Activated CD4-positive, alpha-beta T cell treated with anti-CD3 and anti-CD28 coated beads, Interleukin-2, amount 10 ng/mL, durations not matched to agents 24 days and 14 days (primary cell): ENCODE measurements at regions of chr2 and their contacts with region 1.

Region 1: GRCh38 chr2:97673182-97673914 is 3.8 kb downstream of the C2orf92 start:
- DNase-seq: no peak
- H3K4me3 Mint-ChIP-seq: peak overlapping the region; percentile 60
- H3K27ac Mint-ChIP-seq: peak overlapping the region; percentile 96
- H3K4me1 Mint-ChIP-seq: peaks cover 33% of the 10 kb centered on the region
- H3K27me3 Mint-ChIP-seq: no peaks in the 10 kb centered on the region

Region 2: DNA sequence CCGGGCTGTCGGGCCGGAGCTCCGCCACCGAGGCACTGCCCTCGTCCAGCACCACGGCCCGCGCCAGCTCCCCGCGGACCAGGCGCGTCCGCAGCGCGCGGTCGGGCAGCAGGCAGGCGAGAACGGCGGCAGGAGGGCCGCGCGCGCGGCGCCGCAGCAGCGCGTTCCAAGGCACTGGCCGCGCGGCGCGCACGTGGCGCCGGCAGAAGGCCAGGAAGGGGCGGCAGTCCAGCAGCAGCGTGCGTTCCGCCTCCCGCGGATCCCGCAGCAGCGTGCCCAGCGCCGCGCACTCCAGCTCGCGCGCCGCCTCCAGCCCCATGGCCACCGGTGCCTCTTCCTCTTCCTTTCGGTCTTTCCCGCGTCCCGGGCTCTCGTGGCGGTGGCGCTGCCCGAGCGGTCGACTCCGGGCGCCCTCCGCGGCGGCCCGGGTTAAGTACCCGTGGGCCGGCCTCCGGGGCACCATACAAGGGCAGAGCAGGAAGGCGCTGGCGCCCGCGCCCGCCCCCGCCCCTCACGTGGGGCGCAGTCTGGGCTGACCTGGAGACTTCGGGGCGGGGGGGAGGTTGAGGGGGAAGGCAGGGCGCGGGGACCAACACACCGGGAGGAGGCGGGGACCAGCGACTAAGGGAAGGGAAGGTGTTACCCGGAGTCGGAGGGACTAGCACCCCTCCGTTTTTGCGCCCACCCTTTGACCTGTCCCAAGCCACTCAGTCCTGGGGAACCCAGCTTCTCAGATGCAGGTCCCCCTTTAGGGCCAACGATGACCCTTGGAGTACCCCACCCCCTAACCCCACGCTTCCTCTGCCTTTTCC is 1528.1 kb before region 1 on chr2 and contains the start of gene DUSP2:
- intact Hi-C with region 1: no loop called
- DNase-seq: peak; percentile 97
- H3K4me3 Mint-ChIP-seq: peak within 1 kb of the TSS; percentile 98
- H3K27ac Mint-ChIP-seq: peak within 1 kb of the TSS; percentile 95
- H3K4me1 Mint-ChIP-seq: peaks cover 52% of the 10 kb centered on the region
- H3K27me3 Mint-ChIP-seq: no peaks in the 10 kb centered on the region
- total RNA-seq, gene DUSP2: 436 and 445 TPM in 2 replicates

Region 3: GRCh38 chr2:97688062-97688827 is 14.9 kb after region 1 on chr2:
- intact Hi-C with region 1: loop called (anchors 1 kb)
- DNase-seq: no peak
- H3K4me3 Mint-ChIP-seq: peak overlapping the region; percentile 16
- H3K27ac Mint-ChIP-seq: peak overlapping the region; percentile 68
- H3K4me1 Mint-ChIP-seq: peaks cover 16% of the 10 kb centered on the region
- H3K27me3 Mint-ChIP-seq: no peaks in the 10 kb centered on the region